ENCODE measurements at regions of chr3 and their contacts with region 1.

Region 1: GRCh38 chr3:115783938-115784738 is 160.8 kb downstream of the GAP43 start:
- DNase-seq: peak; percentile 92 to 95 (median 93)
- ATAC-seq: peak; percentile 95 to 97 (median 96)
- H3K4me3 ChIP-seq: peak overlapping the region; percentile 63 to 92 (median 76)
- H3K27ac ChIP-seq: peak overlapping the region; percentile 89 to 99 (median 96)
- H3K4me1 ChIP-seq: peaks cover 0 to 19% (median 13%) of the 10 kb centered on the region in 12 donors
- H3K27me3 ChIP-seq: no peaks in the 10 kb centered on the region
- CTCF ChIP-seq: peak; percentile 92 to 99 (median 98)
- POLR2A ChIP-seq: no peak

Region 2: GRCh38 chr3:115341208-115341607 is 442.9 kb before region 1 on chr3:
- intact Hi-C with region 1: no loop called
- DNase-seq: no peak
- ATAC-seq: peak in 1 of 4 donors; percentile 51
- H3K4me3 ChIP-seq: no peak overlapping the region
- H3K27ac ChIP-seq: no peak overlapping the region
- H3K4me1 ChIP-seq: peaks cover 0 to 7% (median 0%) of the 10 kb centered on the region in 12 donors
- H3K27me3 ChIP-seq: no peaks in the 10 kb centered on the region
- CTCF ChIP-seq: no peak
- POLR2A ChIP-seq: no peak

Region 3: DNA sequence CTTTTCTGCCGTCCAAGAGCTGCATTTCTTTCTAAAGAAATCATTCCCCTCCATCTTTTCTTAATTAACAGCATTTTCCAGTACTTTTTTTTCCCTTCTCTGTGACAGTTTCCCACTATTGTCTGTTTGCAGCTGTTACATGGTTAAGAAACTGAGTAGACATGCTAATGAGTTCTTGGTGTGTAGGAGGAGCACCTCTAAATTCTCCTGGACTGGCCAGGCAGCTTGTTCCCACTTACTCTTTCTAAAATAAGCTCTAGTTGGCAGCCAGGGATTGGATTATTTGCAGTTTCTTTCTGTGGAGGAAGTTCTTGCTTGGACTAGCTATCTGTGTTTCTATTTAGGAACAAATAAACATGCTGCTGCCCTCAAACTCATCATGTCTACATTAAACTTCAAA is 396.0 kb before region 1 on chr3:
- intact Hi-C with region 1: loop called in 1 of 10 experiments (anchors 10 kb)
- DNase-seq: peak in 2 of 5 donors; percentile 20 to 40
- ATAC-seq: peak; percentile 91 to 94 (median 92)
- H3K4me3 ChIP-seq: no peak overlapping the region
- H3K27ac ChIP-seq: peak overlapping the region in 11 of 12 donors; percentile 4 to 73 (median 57)
- H3K4me1 ChIP-seq: peaks cover 0 to 17% (median 12%) of the 10 kb centered on the region in 12 donors
- H3K27me3 ChIP-seq: no peaks in the 10 kb centered on the region
- CTCF ChIP-seq: no peak
- POLR2A ChIP-seq: no peak

Region 4: GRCh38 chr3:115518100-115518852 is 265.9 kb before region 1 on chr3:
- intact Hi-C with region 1: loop called in 1 of 10 experiments (anchors 5 kb)
- DNase-seq: peak; percentile 81 to 94 (median 85)
- ATAC-seq: peak; percentile 95 to 98 (median 98)
- H3K4me3 ChIP-seq: no peak overlapping the region
- H3K27ac ChIP-seq: peak overlapping the region; percentile 9 to 81 (median 68)
- H3K4me1 ChIP-seq: peaks cover 0 to 27% (median 15%) of the 10 kb centered on the region in 12 donors
- H3K27me3 ChIP-seq: no peaks in the 10 kb centered on the region
- CTCF ChIP-seq: no peak
- POLR2A ChIP-seq: no peak

Region 5: DNA sequence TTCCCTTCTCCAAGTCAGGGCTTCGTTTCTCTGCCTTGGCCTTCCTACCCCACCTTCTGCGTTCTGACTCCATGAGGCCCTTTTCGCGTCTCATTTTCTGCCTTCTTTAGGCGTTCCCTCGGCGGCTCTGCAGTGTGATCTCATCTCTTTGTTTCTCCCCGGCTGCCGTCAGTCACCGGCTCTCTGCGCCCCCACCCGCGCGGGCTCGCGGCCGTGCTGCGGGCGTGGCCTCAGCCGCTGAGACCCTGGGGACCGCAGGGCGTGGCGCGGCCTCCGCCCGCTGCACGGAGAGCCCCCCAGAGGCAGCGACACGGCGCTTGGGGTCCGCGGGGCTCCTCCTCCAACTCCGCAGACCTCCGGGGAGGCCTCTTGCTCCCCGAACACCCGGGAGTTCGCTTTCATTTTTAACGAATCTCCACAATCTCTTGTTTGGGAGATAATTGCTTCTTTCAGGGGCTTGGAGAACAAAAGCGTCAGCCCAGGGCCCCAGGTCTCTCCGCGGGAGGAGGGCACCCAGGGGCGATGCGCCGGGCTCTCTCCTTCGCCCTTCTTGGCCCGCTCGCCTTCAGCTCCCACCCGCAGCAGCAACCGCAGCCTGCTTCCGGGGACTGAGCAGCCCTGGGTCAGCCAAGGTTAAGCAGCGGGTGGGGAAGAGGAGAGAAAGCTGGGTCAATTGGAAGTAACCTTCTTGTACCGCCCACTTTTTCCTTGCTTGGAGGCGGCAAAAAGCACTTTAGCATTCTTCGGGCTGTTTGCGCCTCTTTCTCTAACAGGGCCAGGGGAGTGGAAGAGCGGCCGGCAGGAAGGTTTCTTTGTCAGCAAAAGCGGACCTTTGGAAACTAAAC is 125.6 kb before region 1 on chr3:
- intact Hi-C with region 1: loop called in 1 of 10 experiments (anchors 10 kb)
- DNase-seq: peak; percentile 86 to 91 (median 89)
- ATAC-seq: peak; percentile 85 to 98 (median 96)
- H3K4me3 ChIP-seq: peak overlapping the region; percentile 49 to 93 (median 82)
- H3K27ac ChIP-seq: peak overlapping the region; percentile 90 to 100 (median 98)
- H3K4me1 ChIP-seq: peaks cover 0 to 33% (median 21%) of the 10 kb centered on the region in 12 donors
- H3K27me3 ChIP-seq: no peaks in the 10 kb centered on the region
- CTCF ChIP-seq: peak in 1 of 12 donors; percentile 18
- POLR2A ChIP-seq: peak in 1 of 2 donors; percentile 49